ENCODE measurements at regions of chr15 and their contacts with region 1.

Region 1: GRCh38 chr15:31977812-31978661 is 52.3 kb upstream of the CHRNA7 start:
- DNase-seq: no peak
- ATAC-seq: peak; percentile 94
- H3K4me3 ChIP-seq: no peak overlapping the region
- H3K27ac ChIP-seq: no peak overlapping the region
- H3K4me1 ChIP-seq: no peaks in the 10 kb centered on the region
- H3K27me3 ChIP-seq: no peaks in the 10 kb centered on the region
- CTCF ChIP-seq: peak; percentile 70 to 83 (median 82)
- EP300 ChIP-seq: no peak
- POLR2A ChIP-seq: no peak
- RAD21 ChIP-seq: peak; percentile 45

Region 2: GRCh38 chr15:31499953-31500765 is 477.9 kb before region 1 on chr15:
- CTCF ChIA-PET with region 1: no interaction called
- POLR2A ChIA-PET with region 1: no interaction called
- RAD21 ChIA-PET with region 1: no interaction called
- SMC1A ChIA-PET with region 1: no interaction called
- in situ Hi-C with region 1: no loop called
- intact Hi-C with region 1: loop called (anchors 5 kb)
- DNase-seq: no peak
- ATAC-seq: no peak
- H3K4me3 ChIP-seq: no peak overlapping the region
- H3K27ac ChIP-seq: no peak overlapping the region
- H3K4me1 ChIP-seq: peaks cover 4% of the 10 kb centered on the region
- H3K27me3 ChIP-seq: no peaks in the 10 kb centered on the region; a peak in 1 of 4 replicates
- CTCF ChIP-seq: no peak
- EP300 ChIP-seq: no peak
- POLR2A ChIP-seq: no peak
- RAD21 ChIP-seq: no peak

Region 3: GRCh38 chr15:31660816-31661215 is 317.2 kb before region 1 on chr15:
- CTCF ChIA-PET with region 1: no interaction called
- POLR2A ChIA-PET with region 1: no interaction called
- RAD21 ChIA-PET with region 1: no interaction called
- SMC1A ChIA-PET with region 1: no interaction called
- in situ Hi-C with region 1: no loop called
- intact Hi-C with region 1: loop called (anchors 10 kb)
- DNase-seq: no peak
- ATAC-seq: no peak
- H3K4me3 ChIP-seq: no peak overlapping the region
- H3K27ac ChIP-seq: no peak overlapping the region
- H3K4me1 ChIP-seq: no peaks in the 10 kb centered on the region
- H3K27me3 ChIP-seq: no peaks in the 10 kb centered on the region
- CTCF ChIP-seq: no peak
- EP300 ChIP-seq: no peak
- POLR2A ChIP-seq: no peak
- RAD21 ChIP-seq: no peak

Region 4: DNA sequence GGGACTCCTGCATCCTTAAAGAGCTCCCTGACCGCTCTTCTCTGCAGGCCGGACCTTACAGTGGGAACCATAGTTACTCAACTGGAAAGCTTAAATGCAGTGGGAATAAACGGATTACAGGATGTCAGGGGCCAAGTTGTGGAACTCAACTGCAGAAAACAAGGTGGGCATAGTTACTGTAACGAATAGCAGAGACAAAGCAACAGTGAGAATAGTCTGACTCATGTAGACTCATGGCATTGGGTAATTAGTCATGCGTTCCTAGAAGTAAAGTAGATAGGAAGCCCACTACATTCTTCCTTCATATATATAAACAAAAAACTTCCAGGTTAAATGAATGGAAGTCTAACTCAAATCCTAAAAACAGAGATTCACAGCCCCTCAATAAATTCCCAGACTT is 43.2 kb before region 1 on chr15:
- CTCF ChIA-PET with region 1: no interaction called
- POLR2A ChIA-PET with region 1: no interaction called
- RAD21 ChIA-PET with region 1: no interaction called
- SMC1A ChIA-PET with region 1: no interaction called
- in situ Hi-C with region 1: no loop called
- intact Hi-C with region 1: no loop called
- DNase-seq: no peak
- ATAC-seq: no peak
- H3K4me3 ChIP-seq: no peak overlapping the region
- H3K27ac ChIP-seq: no peak overlapping the region
- H3K4me1 ChIP-seq: no peaks in the 10 kb centered on the region
- H3K27me3 ChIP-seq: no peaks in the 10 kb centered on the region
- CTCF ChIP-seq: no peak
- EP300 ChIP-seq: no peak
- POLR2A ChIP-seq: no peak
- RAD21 ChIP-seq: no peak

Region 5: GRCh38 chr15:31964586-31965307 is 13.3 kb before region 1 on chr15:
- CTCF ChIA-PET with region 1: interaction called, 21 read pairs
- POLR2A ChIA-PET with region 1: no interaction called
- RAD21 ChIA-PET with region 1: interaction called, 3 read pairs
- SMC1A ChIA-PET with region 1: no interaction called
- in situ Hi-C with region 1: no loop called
- intact Hi-C with region 1: no loop called
- DNase-seq: no peak
- ATAC-seq: no peak
- H3K4me3 ChIP-seq: no peak overlapping the region
- H3K27ac ChIP-seq: no peak overlapping the region
- H3K4me1 ChIP-seq: no peaks in the 10 kb centered on the region
- H3K27me3 ChIP-seq: no peaks in the 10 kb centered on the region
- CTCF ChIP-seq: no peak
- EP300 ChIP-seq: no peak
- POLR2A ChIP-seq: no peak
- RAD21 ChIP-seq: no peak

Region 6: GRCh38 chr15:32003558-32003957 is 25.5 kb after region 1 on chr15:
- CTCF ChIA-PET with region 1: no interaction called
- POLR2A ChIA-PET with region 1: no interaction called
- RAD21 ChIA-PET with region 1: no interaction called
- SMC1A ChIA-PET with region 1: no interaction called
- in situ Hi-C with region 1: no loop called
- intact Hi-C with region 1: no loop called
- DNase-seq: no peak
- ATAC-seq: no peak
- H3K4me3 ChIP-seq: no peak overlapping the region
- H3K27ac ChIP-seq: no peak overlapping the region
- H3K4me1 ChIP-seq: no peaks in the 10 kb centered on the region
- H3K27me3 ChIP-seq: no peaks in the 10 kb centered on the region
- CTCF ChIP-seq: no peak
- EP300 ChIP-seq: no peak
- POLR2A ChIP-seq: no peak
- RAD21 ChIP-seq: no peak

Region 7: DNA sequence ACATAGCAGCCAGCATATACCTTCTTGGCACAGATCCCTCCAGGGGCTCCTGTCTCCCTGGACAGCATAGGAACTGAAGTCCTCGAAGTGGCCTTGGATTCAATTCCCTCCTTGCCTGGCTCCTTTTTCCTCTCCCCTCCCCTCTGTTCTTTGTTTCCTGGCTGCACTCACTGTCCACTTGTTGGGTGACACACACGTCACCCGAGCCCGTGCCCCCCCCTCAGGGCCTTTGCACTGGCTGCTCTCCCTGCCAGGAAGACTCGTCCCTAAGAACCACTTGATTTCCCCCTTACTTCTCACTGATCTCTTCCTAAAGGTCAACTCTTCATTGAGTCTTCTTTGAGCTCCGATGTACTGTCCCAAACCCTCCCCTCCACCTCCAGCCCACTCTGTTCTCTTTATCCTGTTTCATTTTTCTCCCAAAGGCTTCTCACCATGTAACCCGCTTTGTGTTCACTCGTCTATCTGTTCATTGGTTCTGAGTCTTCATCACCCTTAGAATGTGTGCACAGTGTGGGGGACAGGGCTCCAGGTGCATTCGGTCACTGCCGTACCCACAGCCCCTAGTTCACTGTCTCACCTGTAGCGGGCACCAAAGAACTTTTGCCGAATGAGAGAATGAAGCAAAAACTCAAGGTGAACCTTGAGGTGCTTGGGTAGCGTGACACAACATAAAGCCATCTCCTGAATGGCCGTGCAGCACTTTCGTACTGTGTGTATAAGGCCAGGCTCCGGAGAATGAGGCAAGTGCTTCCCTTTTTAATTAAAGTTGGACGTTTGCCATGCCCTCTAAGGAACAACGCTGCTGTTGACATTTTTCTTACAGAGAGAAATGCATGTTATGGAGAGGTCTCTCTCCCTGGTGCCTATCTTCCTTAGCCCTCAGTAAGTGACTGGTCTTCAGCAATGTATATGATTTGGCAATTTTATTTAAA is 126.3 kb after region 1 on chr15:
- CTCF ChIA-PET with region 1: no interaction called
- POLR2A ChIA-PET with region 1: no interaction called
- RAD21 ChIA-PET with region 1: no interaction called
- SMC1A ChIA-PET with region 1: no interaction called
- in situ Hi-C with region 1: no loop called
- intact Hi-C with region 1: loop called (anchors 10 kb)
- DNase-seq: no peak
- ATAC-seq: peak; percentile 40; the same call in 1 of the 3 replicates
- H3K4me3 ChIP-seq: no peak overlapping the region
- H3K27ac ChIP-seq: no peak overlapping the region
- H3K4me1 ChIP-seq: no peaks in the 10 kb centered on the region
- H3K27me3 ChIP-seq: no peaks in the 10 kb centered on the region
- CTCF ChIP-seq: peak; percentile 6 to 28 (median 25); a peak in 1 of 6 replicates
- EP300 ChIP-seq: no peak
- POLR2A ChIP-seq: no peak
- RAD21 ChIP-seq: no peak